ENCODE measurements at regions of chr19 and their contacts with region 1.

Region 1: DNA sequence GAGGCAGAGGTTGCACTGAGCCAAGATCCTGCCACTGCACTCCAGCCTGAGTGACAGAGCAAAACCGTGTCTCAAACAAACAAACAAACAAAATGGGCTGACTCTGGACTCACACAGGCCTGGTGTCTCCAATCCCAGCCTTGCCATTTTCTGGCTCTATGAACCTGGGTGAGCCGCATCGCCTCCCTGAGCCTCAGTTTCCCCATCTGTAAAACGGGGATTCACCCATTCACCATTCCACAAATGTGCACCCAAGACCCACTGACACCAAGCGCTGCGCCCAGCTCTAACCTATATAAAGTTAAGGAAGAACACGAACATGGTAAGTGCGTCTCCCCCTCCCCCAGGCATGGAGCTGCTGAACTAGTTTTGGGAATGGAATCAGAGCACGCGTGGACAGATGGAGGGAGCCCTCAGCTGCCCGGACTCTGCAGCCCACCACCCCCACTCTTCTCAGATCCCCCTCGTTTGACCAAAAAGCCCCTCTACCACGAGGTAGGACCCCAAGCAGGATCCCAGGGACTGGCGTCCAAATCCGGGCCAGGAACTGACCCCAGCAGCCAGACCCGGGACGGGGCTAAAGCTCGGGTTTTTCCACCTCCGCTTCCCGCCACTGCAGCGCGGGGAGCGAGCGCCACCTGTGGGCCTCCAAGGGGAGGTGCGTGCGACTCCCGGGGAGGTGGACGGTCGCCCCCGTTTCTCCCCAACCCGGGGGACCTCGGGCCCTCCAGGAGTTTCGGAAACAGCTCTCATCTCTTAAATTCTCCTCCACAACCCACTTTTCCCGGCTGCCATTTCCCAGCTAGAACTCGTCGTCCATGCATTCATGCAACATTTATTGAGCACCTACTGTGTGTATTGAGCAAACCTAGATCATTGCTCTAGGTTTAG is 33.0 kb upstream of the ADGRE5 start:
- DNase-seq: no peak
- H3K4me3 ChIP-seq: peak overlapping the region; percentile 32 to 54 (median 44)
- H3K27ac ChIP-seq: no peak overlapping the region
- H3K4me1 ChIP-seq: peaks cover 4 to 10% (median 9%) of the 10 kb centered on the region in 4 donors
- H3K27me3 ChIP-seq: no peaks in the 10 kb centered on the region
- CTCF ChIP-seq: peak; percentile 95 to 97 (median 96)
- EP300 ChIP-seq: no peak
- POLR2A ChIP-seq: no peak

Region 2: DNA sequence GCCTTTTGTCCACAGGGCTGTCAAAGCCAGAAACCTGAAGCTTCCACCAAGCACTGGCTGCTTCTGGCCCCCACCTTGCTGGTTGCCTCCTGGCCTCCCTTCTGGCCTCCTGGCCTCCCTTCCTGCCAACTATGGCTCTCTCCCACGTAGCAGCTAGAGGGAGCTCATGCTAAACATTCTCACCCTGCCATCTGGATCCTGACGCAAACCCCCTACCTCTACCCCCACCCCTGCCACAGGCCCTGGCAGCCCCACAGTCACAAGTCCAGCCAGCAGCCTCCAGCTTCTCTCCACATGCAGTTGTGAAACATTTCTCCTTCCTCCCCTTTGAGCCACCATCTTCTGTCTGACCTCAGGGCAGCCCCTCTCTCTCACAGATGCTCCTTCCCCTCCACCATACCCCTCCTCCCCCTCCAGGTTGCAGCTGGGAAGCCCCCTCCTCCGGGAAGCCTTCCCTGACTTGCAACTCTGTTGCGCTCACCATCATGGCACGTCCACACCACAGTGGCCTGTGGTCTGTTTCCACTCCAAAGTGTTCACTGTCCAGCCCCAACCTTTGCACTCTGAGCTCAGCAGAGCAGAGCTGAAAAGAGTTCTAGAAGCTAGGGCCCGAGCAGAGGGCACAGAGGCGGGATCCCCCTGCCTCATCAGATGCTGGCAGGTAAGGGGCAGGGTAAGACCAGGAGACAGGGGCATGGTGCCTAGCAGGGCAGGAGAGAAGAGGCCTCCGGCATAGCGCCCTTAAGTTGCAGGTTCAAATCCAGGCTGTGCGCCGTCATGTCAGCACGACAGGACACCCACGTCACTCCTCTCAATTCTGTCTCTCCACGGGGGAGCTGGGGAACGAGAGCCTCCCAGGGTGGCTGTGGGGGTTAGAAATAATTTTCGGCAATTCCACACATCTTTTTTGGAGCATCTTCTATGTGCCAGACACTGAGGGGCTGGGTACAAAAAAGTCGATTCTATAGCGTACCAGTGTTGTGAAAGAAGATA is 149.6 kb before region 1 on chr19:
- intact Hi-C with region 1: loop called (anchors 1 kb)
- DNase-seq: no peak
- H3K4me3 ChIP-seq: no peak overlapping the region
- H3K27ac ChIP-seq: no peak overlapping the region
- H3K4me1 ChIP-seq: peaks cover 0 to 57% (median 32%) of the 10 kb centered on the region in 4 donors
- H3K27me3 ChIP-seq: no peaks in the 10 kb centered on the region
- CTCF ChIP-seq: no peak
- EP300 ChIP-seq: no peak
- POLR2A ChIP-seq: no peak

Measured in esophagus muscularis mucosa (tissue), 4 donors.